WTC11 (cell line): ENCODE measurements at regions of chr17 and their contacts with region 1.

Region 1: DNA sequence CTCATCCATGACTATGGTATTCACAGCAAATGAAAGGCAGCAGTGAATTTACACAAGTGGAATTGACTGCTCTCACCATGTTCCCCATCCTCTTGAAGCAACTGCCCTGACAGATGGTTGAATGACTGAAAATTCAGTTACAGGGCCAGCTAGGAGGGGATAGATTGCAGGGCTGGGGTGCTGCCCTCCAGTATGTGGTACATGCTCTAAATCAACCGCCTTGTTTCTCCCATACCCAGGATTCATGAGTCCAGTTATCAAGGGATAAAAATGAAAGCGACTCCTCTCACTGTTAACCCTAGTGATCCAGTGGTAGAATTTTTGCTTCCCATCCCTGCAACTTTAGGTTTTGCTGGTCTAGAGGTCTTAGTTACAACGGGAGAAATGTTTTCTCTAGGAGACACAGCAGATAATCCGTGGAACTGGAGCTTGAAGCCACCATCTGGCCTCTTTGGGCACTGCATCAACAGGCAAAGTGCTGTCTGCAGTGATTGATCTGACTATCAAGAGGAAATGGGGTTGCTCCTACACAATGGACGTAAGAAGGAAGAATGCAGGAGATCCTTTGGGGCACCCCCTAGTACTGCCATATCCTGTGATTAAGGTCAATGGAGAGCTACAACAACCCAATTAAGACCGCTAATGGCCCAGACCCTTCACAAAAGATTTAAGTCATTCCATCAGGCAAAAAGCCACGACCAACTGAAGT is 32.0 kb downstream of the SCPEP1 start:
- DNase-seq: peak; percentile 70
- ATAC-seq: peak; percentile 90
- H3K4me3 Mint-ChIP-seq: no peak overlapping the region
- H3K27ac Mint-ChIP-seq: peak overlapping the region; percentile 61
- H3K4me1 Mint-ChIP-seq: peaks cover 25% of the 10 kb centered on the region
- H3K27me3 Mint-ChIP-seq: no peaks in the 10 kb centered on the region
- CTCF ChIP-seq: peak; percentile 38; the same call in 1 of the 2 replicates

Region 2: GRCh38 chr17:56977673-56978395 is 32.1 kb before region 1 on chr17 and contains the start of gene SCPEP1:
- CTCF ChIA-PET with region 1: interaction called, 15 read pairs
- POLR2A ChIA-PET with region 1: no interaction called
- DNase-seq: peak; percentile 87
- ATAC-seq: peak; percentile 86
- H3K4me3 Mint-ChIP-seq: peak within 1 kb of the TSS; percentile 88
- H3K27ac Mint-ChIP-seq: peak within 1 kb of the TSS; percentile 91
- H3K4me1 Mint-ChIP-seq: peaks cover 56% of the 10 kb centered on the region
- H3K27me3 Mint-ChIP-seq: no peaks in the 10 kb centered on the region
- CTCF ChIP-seq: no peak
- total RNA-seq, gene SCPEP1: 41.3 to 49.3 TPM (median 43.1 TPM) in 3 replicates

Region 3: GRCh38 chr17:57021226-57021940 is 11.5 kb after region 1 on chr17:
- CTCF ChIA-PET with region 1: interaction called, 11 read pairs
- POLR2A ChIA-PET with region 1: no interaction called
- DNase-seq: no peak
- ATAC-seq: no peak
- H3K4me3 Mint-ChIP-seq: no peak overlapping the region
- H3K27ac Mint-ChIP-seq: no peak overlapping the region
- H3K4me1 Mint-ChIP-seq: peaks cover 40% of the 10 kb centered on the region
- H3K27me3 Mint-ChIP-seq: no peaks in the 10 kb centered on the region; the same call in 1 of the 2 replicates
- CTCF ChIP-seq: no peak

Region 4: GRCh38 chr17:57051886-57052361 is 42.0 kb after region 1 on chr17:
- CTCF ChIA-PET with region 1: interaction called, 12 read pairs
- POLR2A ChIA-PET with region 1: no interaction called
- DNase-seq: no peak
- ATAC-seq: peak; percentile 43; the same call in 1 of the 2 replicates
- H3K4me3 Mint-ChIP-seq: no peak overlapping the region
- H3K27ac Mint-ChIP-seq: peak overlapping the region; percentile 78; the same call in 1 of the 2 replicates
- H3K4me1 Mint-ChIP-seq: peaks cover 23% of the 10 kb centered on the region
- H3K27me3 Mint-ChIP-seq: no peaks in the 10 kb centered on the region
- CTCF ChIP-seq: no peak

Region 5: DNA sequence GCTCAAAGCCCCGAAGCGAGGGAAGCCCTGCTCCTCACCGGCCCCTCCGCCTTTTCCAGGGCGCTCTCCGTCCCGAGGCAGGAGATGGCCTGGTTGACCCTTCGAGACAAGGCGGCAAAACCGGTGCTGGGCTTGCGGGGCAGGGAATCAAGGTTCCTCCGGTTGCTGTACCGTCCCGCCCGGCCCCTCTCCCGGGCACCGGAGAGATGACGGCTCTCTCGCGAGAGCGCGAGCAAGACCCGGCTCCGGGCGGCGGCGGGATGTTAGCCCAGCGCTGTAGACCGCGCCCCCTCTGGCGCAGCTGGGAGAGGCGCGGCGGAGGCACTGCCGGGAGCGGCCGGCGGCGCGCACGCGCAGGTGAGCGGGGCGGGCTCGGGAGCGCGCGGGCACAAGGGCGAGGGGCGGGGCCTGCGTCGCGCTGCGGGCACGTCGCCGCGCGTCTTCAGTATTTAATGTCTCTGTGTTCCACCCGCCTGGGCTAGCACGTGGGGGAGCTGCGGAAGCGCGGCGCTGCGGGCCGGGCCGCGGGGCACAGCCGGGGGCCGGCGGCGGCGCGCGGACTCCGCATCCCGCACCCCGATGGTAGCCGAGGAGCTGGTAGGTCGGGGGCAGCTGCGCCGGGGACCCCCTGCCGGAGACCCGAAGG is 75.0 kb after region 1 on chr17 and contains the start of gene AKAP1:
- CTCF ChIA-PET with region 1: interaction called, 15 read pairs
- POLR2A ChIA-PET with region 1: no interaction called
- DNase-seq: peak; percentile 96
- ATAC-seq: peak; percentile 96
- H3K4me3 Mint-ChIP-seq: peak within 1 kb of the TSS; percentile 88
- H3K27ac Mint-ChIP-seq: peak within 1 kb of the TSS; percentile 98
- H3K4me1 Mint-ChIP-seq: peaks cover 53% of the 10 kb centered on the region
- H3K27me3 Mint-ChIP-seq: peaks cover 2% of the 10 kb centered on the region; the same call in 1 of the 2 replicates
- CTCF ChIP-seq: no peak
- total RNA-seq, gene AKAP1: 55.9 to 74.5 TPM (median 56.2 TPM) in 3 replicates

Region 6: GRCh38 chr17:57106107-57106835 is 96.4 kb after region 1 on chr17:
- CTCF ChIA-PET with region 1: interaction called, 38 read pairs
- POLR2A ChIA-PET with region 1: no interaction called
- DNase-seq: peak; percentile 61
- ATAC-seq: peak; percentile 74
- H3K4me3 Mint-ChIP-seq: no peak overlapping the region
- H3K27ac Mint-ChIP-seq: peak overlapping the region; percentile 88
- H3K4me1 Mint-ChIP-seq: peaks cover 69% of the 10 kb centered on the region
- H3K27me3 Mint-ChIP-seq: no peaks in the 10 kb centered on the region
- CTCF ChIP-seq: peak; percentile 33; the same call in 1 of the 2 replicates